Panc1 (cell line): ENCODE measurements at regions of chr4 and their contacts with region 1.

Region 1: DNA sequence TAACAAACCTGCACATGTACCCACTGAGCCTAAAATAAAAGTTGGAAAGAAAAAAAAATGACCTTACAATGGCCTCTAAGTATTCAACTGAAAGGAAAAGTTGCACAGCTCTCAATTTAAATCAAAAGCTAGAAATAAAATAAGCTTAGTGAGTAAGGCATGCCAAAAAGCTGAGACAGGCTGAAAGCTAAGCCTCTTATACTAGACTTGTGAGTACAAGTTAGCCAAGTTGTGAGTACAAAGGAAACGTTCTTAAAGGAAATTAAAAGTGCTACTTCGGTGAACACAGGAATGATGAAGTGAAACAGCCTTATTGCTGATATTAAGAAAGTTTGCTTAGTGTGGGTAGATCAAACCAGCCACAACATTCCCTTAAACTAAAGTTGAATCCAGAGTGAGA is 707.9 kb upstream of the PITX2 start:
- DNase-seq: no peak
- ATAC-seq: no peak
- H3K4me3 ChIP-seq: no peak overlapping the region
- H3K27ac ChIP-seq: no peak overlapping the region
- H3K4me1 ChIP-seq: no peaks in the 10 kb centered on the region
- H3K27me3 ChIP-seq: no peaks in the 10 kb centered on the region
- CTCF ChIP-seq: no peak

Region 2: GRCh38 chr4:111388561-111388960 is 57.8 kb after region 1 on chr4:
- CTCF ChIA-PET with region 1: no interaction called
- POLR2A ChIA-PET with region 1: no interaction called
- in situ Hi-C with region 1: no loop called
- intact Hi-C with region 1: no loop called
- DNase-seq: no peak
- ATAC-seq: no peak
- H3K4me3 ChIP-seq: no peak overlapping the region
- H3K27ac ChIP-seq: no peak overlapping the region
- H3K4me1 ChIP-seq: no peaks in the 10 kb centered on the region
- H3K27me3 ChIP-seq: no peaks in the 10 kb centered on the region
- CTCF ChIP-seq: no peak

Region 3: GRCh38 chr4:111890412-111890811 is 559.6 kb after region 1 on chr4:
- CTCF ChIA-PET with region 1: no interaction called
- POLR2A ChIA-PET with region 1: no interaction called
- in situ Hi-C with region 1: no loop called
- intact Hi-C with region 1: loop called (anchors 10 kb)
- DNase-seq: no peak
- ATAC-seq: no peak
- H3K4me3 ChIP-seq: no peak overlapping the region
- H3K27ac ChIP-seq: no peak overlapping the region
- H3K4me1 ChIP-seq: no peaks in the 10 kb centered on the region
- H3K27me3 ChIP-seq: no peaks in the 10 kb centered on the region
- CTCF ChIP-seq: no peak